H1 (cell line): ENCODE measurements at regions of chr12 and their contacts with region 1.

Region 1: GRCh38 chr12:114152890-114153289 is 186.8 kb upstream of the RBM19 start:
- DNase-seq: no peak
- H3K4me3 ChIP-seq: no peak overlapping the region
- H3K27ac ChIP-seq: no peak overlapping the region
- H3K4me1 ChIP-seq: no peaks in the 10 kb centered on the region
- H3K27me3 ChIP-seq: 0 out of 7 replicates have a peak, but pooled peaks cover 0 to 8% (median 0%) of the 10 kb centered on the region in 4 experiments
- CTCF ChIP-seq: no peak
- EP300 ChIP-seq: no peak
- POLR2A ChIP-seq: no peak
- RAD21 ChIP-seq: no peak

Region 2: GRCh38 chr12:114140576-114140975 is 12.3 kb before region 1 on chr12:
- CTCF ChIA-PET with region 1: interaction called, 17 read pairs
- POLR2A ChIA-PET with region 1: no interaction called
- DNase-seq: no peak
- H3K4me3 ChIP-seq: no peak overlapping the region
- H3K27ac ChIP-seq: no peak overlapping the region
- H3K4me1 ChIP-seq: no peaks in the 10 kb centered on the region
- H3K27me3 ChIP-seq: peaks cover 0 to 9% (median 1%) of the 10 kb centered on the region in 4 experiments; a peak in 4 of 7 replicates
- CTCF ChIP-seq: no peak
- EP300 ChIP-seq: no peak
- POLR2A ChIP-seq: no peak
- RAD21 ChIP-seq: no peak